ENCODE measurements at regions of chr4 and their contacts with region 1.

Region 1: DNA sequence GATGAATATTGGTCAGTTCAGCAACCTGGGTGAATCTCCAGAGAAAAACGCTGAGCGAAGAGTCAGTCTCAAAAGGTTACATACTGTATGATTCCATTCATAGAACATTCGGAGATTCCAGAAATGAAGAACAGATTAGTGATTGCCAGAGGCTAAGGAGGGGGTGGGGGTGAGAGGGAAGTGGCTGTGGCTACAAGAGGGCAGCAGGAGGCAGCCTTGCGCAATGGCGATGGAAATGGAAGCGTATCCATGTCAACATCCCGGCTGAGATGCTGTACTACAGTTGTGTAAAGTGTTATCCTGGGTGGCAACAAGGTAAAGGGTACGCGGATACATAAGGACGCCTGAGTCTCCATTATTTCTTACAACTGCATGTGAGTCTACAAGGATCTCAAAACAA is 18.0 kb downstream of the LYAR start:
- DNase-seq: no peak
- H3K4me3 ChIP-seq: no peak overlapping the region
- H3K27ac ChIP-seq: no peak overlapping the region
- H3K4me1 ChIP-seq: no peaks in the 10 kb centered on the region
- H3K27me3 ChIP-seq: peaks cover 0 to 2% (median 0%) of the 10 kb centered on the region in 4 experiments; a peak in 1 of 7 replicates
- CTCF ChIP-seq: peak; percentile 14 to 55 (median 55); a peak in 3 of 4 replicates
- EP300 ChIP-seq: no peak
- POLR2A ChIP-seq: no peak
- RAD21 ChIP-seq: peak; percentile 37

Region 2: GRCh38 chr4:3871181-3871871 is 400.6 kb before region 1 on chr4:
- CTCF ChIA-PET with region 1: no interaction called
- POLR2A ChIA-PET with region 1: no interaction called
- DNase-seq: peak; percentile 61 to 92
- H3K4me3 ChIP-seq: peak overlapping the region; percentile 26 to 56 (median 44)
- H3K27ac ChIP-seq: no peak overlapping the region
- H3K4me1 ChIP-seq: peaks cover 0 to 19% (median 8%) of the 10 kb centered on the region in 4 experiments; a peak in 6 of 7 replicates
- H3K27me3 ChIP-seq: peaks cover 7 to 40% (median 27%) of the 10 kb centered on the region in 4 experiments
- CTCF ChIP-seq: no peak
- EP300 ChIP-seq: no peak
- POLR2A ChIP-seq: no peak
- RAD21 ChIP-seq: no peak

Region 3: GRCh38 chr4:4260253-4260652 is 11.7 kb before region 1 on chr4:
- CTCF ChIA-PET with region 1: interaction called, 12 read pairs
- POLR2A ChIA-PET with region 1: interaction called, 3 read pairs
- DNase-seq: no peak
- H3K4me3 ChIP-seq: no peak overlapping the region
- H3K27ac ChIP-seq: no peak overlapping the region
- H3K4me1 ChIP-seq: no peaks in the 10 kb centered on the region
- H3K27me3 ChIP-seq: no peaks in the 10 kb centered on the region
- CTCF ChIP-seq: peak in 2 of 3 experiments; percentile 39 to 55; a peak in 3 of 4 replicates
- EP300 ChIP-seq: no peak
- POLR2A ChIP-seq: no peak
- RAD21 ChIP-seq: peak; percentile 26 to 39; a peak in 3 of 4 replicates

Region 4: GRCh38 chr4:4308800-4309441 is 37.0 kb after region 1 on chr4:
- CTCF ChIA-PET with region 1: no interaction called
- POLR2A ChIA-PET with region 1: no interaction called
- DNase-seq: no peak
- H3K4me3 ChIP-seq: no peak overlapping the region
- H3K27ac ChIP-seq: no peak overlapping the region
- H3K4me1 ChIP-seq: no peaks in the 10 kb centered on the region
- H3K27me3 ChIP-seq: no peaks in the 10 kb centered on the region
- CTCF ChIP-seq: no peak
- EP300 ChIP-seq: no peak
- POLR2A ChIP-seq: no peak
- RAD21 ChIP-seq: no peak

Region 5: DNA sequence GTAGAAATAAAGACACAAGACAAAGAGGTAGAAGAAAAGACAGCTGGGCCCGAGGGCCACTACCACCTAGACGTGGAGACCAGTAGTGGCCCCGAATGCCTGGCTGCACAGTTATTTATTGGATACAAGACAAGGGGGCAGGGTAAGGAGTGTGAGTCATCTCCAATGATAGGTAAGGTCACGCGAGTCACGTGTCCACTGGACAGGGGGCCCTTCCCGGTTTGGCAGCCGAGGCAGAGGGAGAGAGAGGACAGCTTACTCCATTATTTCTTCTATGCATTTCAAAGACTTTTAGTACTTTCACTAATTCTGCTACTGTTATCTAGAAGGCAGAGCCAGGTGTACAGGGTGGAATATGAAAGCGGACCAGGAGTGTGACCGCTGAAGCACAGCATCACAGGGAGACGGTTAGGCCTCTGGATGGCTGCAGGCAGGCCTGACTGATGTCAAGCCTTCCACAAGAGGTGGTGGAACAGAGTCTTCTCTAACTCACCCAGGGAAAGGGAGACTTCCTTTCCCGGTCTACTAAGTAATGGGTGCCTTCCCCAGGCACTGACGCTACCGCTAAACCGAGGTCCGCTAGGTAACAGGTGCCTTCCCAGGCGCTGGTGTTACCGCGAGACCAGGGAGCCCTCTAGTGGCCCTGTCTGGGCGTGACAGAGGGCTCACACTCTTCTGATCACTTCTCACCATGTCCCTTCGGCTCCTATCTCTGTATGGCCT is 63.0 kb after region 1 on chr4:
- CTCF ChIA-PET with region 1: interaction called, 12 read pairs
- POLR2A ChIA-PET with region 1: no interaction called
- DNase-seq: peak; percentile 31 to 79
- H3K4me3 ChIP-seq: no peak overlapping the region
- H3K27ac ChIP-seq: no peak overlapping the region
- H3K4me1 ChIP-seq: no peaks in the 10 kb centered on the region
- H3K27me3 ChIP-seq: no peaks in the 10 kb centered on the region
- CTCF ChIP-seq: peak; percentile 75 to 82 (median 78)
- EP300 ChIP-seq: no peak
- POLR2A ChIP-seq: no peak
- RAD21 ChIP-seq: peak; percentile 83 to 88

Region 6: GRCh38 chr4:4455210-4455865 is 183.4 kb after region 1 on chr4:
- CTCF ChIA-PET with region 1: no interaction called
- POLR2A ChIA-PET with region 1: no interaction called
- DNase-seq: no peak
- H3K4me3 ChIP-seq: no peak overlapping the region
- H3K27ac ChIP-seq: 0 out of 2 replicates have a peak overlapping the region, but pooled peaks have one; percentile 0
- H3K4me1 ChIP-seq: peaks cover 7 to 18% (median 12%) of the 10 kb centered on the region in 4 experiments; a peak in 6 of 7 replicates
- H3K27me3 ChIP-seq: no peaks in the 10 kb centered on the region
- CTCF ChIP-seq: no peak
- EP300 ChIP-seq: no peak
- POLR2A ChIP-seq: no peak
- RAD21 ChIP-seq: no peak